ENCODE measurements at regions of chr7 and their contacts with region 1.

Region 1: DNA sequence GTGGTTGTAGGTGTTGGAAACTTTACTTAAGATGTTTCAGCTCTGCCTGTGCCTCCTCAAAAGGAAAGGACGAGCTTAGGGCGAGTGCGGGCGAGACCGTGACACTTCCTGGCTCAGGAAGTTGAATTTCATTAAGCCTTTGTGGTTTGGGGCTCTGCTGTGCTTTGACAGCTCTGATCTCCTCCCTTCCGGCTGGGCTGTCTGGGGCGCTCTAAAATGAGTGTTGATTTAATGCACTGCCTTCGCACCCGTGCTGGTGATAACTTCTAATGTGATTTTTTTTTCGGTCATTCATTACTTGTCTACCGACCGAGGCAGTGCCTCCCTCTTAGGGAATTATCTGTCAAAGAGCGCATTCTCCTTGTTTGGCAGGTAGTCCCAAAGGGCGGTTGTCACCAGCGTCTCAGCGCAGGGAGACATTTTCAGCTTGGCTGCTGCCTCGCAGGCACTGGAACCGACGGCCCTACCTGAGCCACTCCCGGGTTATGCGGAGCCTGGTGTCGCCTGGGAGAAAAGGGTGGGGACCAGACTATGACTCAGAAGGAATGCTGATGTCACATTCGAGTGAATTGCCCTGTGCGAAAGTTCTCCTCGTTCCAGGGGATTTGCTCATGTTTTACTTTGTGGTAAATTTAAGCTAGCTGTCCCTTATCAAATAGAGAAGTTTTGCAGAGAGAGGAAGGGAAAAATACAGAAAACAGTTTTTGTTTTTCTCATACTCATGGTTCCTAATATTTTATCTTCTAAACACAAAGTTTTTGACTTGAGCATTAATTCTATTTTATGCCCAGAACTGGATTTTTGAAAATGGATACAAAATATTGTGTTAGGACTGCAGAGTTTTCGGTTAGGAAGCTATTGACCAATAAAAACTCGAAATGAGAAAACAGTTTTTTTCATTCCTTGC is 920 bp downstream of the TES start:
- DNase-seq: peak; percentile 74 to 81 (median 79)
- ATAC-seq: peak; percentile 89 to 97 (median 94)
- H3K4me3 ChIP-seq: peak overlapping the region; percentile 58 to 87 (median 80)
- H3K27ac ChIP-seq: peak overlapping the region; percentile 82 to 97 (median 91)
- H3K4me1 ChIP-seq: peaks cover 0 to 50% (median 21%) of the 10 kb centered on the region in 12 donors
- H3K27me3 ChIP-seq: no peaks in the 10 kb centered on the region
- CTCF ChIP-seq: no peak
- POLR2A ChIP-seq: peak in 1 of 2 donors; percentile 84

Region 2: GRCh38 chr7:115340828-115341227 is 870.4 kb before region 1 on chr7:
- intact Hi-C with region 1: no loop called
- DNase-seq: no peak
- ATAC-seq: no peak
- H3K4me3 ChIP-seq: no peak overlapping the region
- H3K27ac ChIP-seq: no peak overlapping the region
- H3K4me1 ChIP-seq: no peaks in the 10 kb centered on the region
- H3K27me3 ChIP-seq: no peaks in the 10 kb centered on the region
- CTCF ChIP-seq: peak in 3 of 12 donors; percentile 9 to 33 (median 32)
- POLR2A ChIP-seq: no peak

Region 3: GRCh38 chr7:116227678-116228239 is 16.5 kb after region 1 on chr7:
- intact Hi-C with region 1: loop called in 2 of 10 experiments (anchors 2 kb)
- DNase-seq: no peak
- ATAC-seq: peak in 3 of 4 donors; percentile 55 to 80 (median 66)
- H3K4me3 ChIP-seq: no peak overlapping the region
- H3K27ac ChIP-seq: peak overlapping the region in 10 of 12 donors; percentile 11 to 89 (median 52)
- H3K4me1 ChIP-seq: peaks cover 11 to 98% (median 50%) of the 10 kb centered on the region in 12 donors
- H3K27me3 ChIP-seq: no peaks in the 10 kb centered on the region
- CTCF ChIP-seq: no peak
- POLR2A ChIP-seq: no peak

Measured in heart left ventricle (tissue), 16 donors.